Ovary (tissue), 10 donors: ENCODE measurements at regions of chr20 and their contacts with region 1.

Region 1: GRCh38 chr20:20407891-20408805 is 40.2 kb downstream of the INSM1 start:
- DNase-seq: no peak
- H3K4me3 ChIP-seq: no peak overlapping the region
- H3K27ac ChIP-seq: no peak overlapping the region
- H3K4me1 ChIP-seq: peaks cover 2% of the 10 kb centered on the region
- H3K27me3 ChIP-seq: no peaks in the 10 kb centered on the region
- CTCF ChIP-seq: no peak
- EP300 ChIP-seq: no peak
- POLR2A ChIP-seq: no peak

Region 2: DNA sequence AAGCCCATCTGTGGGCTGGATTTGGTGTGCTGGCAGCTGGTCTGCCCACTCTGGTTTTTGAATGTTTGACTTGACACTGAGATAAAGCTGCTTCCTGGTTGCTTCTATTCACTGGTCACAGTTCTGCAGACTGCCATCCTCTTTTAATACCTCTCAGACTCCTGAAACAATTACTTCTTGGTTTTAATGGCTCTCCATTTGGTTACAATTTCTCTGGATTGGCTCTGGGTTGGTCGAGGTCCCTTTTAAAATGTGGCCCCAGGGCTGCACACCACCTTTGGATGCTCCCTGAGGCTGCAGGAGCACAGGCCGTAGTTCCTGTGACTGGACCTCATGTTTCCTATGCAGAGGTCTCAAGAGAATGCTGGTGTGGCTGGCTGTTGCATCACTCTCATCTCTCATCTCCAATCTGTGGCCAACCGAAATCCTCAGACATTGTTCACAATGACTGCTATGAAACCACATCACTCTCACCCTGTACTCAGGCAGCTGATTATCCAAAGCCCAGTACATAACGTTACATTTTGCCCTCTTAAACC is 58.3 kb after region 1 on chr20:
- intact Hi-C with region 1: loop called in 1 of 4 experiments (anchors 10 kb)
- DNase-seq: no peak
- H3K4me3 ChIP-seq: no peak overlapping the region
- H3K27ac ChIP-seq: no peak overlapping the region
- H3K4me1 ChIP-seq: no peaks in the 10 kb centered on the region
- H3K27me3 ChIP-seq: no peaks in the 10 kb centered on the region
- CTCF ChIP-seq: no peak
- EP300 ChIP-seq: no peak
- POLR2A ChIP-seq: no peak

Region 3: DNA sequence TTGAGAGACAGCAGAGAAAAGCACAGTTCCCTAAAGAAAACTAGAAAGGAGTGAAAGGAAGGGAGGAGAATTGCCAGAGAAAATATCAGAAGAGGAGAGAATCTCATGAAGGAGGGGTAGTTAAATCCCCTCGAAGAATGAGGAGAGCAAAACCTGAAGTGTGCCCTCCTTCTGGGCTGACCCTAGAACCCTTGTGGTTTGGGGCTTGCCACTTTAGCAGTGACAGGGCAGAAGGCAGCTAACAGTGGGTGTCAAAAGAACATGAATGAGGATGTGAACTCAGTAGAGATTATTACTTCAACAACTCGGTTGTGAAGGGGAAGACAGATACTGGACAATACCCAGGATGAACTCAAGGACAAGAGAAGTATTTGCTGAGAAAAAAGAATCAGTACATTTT is 230.7 kb after region 1 on chr20:
- intact Hi-C with region 1: no loop called
- DNase-seq: no peak
- H3K4me3 ChIP-seq: no peak overlapping the region
- H3K27ac ChIP-seq: no peak overlapping the region
- H3K4me1 ChIP-seq: no peaks in the 10 kb centered on the region
- H3K27me3 ChIP-seq: no peaks in the 10 kb centered on the region
- CTCF ChIP-seq: no peak
- EP300 ChIP-seq: no peak
- POLR2A ChIP-seq: no peak